Breast epithelium (tissue), 4 donors: ENCODE measurements at regions of chr20 and their contacts with region 1.

Region 1: GRCh38 chr20:1810926-1811620 is 84.1 kb upstream of the SIRPA start:
- DNase-seq: peak in 1 of 2 donors; percentile 92
- H3K4me3 ChIP-seq: peak overlapping the region in 1 of 3 donors; percentile 5
- H3K27ac ChIP-seq: peak overlapping the region; percentile 95 to 96
- H3K4me1 ChIP-seq: peaks cover 14 to 22% of the 10 kb centered on the region in 2 donors
- H3K27me3 ChIP-seq: no peaks in the 10 kb centered on the region
- CTCF ChIP-seq: no peak
- POLR2A ChIP-seq: no peak

Region 2: DNA sequence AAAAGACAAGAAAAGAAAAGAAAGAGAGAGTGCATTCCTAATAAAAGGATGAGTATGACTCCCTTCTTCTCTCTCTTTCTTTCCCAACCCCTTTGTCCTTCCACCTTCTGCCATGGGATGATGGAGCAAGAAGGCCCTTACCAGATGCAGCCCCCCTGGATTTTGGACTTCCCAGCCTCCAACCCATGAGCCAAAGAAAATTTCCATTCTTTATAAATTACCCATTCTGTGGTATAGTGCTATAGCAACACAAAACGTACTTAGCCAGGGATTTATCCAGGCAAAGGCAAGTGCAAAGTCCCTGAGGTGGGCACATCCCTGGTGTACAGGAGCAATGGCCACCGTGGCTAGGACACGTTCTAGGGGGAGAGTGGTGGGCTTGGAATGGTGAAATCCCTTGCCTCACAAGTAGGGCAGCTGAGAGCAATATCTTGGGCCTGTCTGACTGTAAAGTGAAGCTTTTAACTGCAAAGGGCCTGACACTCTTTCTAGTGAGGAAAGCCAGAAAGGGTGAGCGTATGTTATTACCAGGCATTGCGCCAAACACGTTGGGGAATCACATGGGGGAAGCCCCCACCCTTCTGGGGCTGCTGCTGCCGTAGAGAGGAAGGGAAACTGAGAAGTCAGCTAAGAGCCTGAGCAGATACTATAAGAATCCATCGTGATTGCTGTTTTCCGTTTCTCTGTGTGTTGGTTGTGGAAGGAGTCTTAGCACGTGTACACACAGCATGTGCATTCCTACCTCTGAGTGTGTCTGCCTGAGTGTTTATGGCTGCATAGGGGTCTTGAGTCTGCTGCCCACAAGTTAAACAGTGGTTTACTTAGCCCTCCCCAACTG is 33.5 kb after region 1 on chr20:
- intact Hi-C with region 1: no loop called
- DNase-seq: no peak
- H3K4me3 ChIP-seq: no peak overlapping the region
- H3K27ac ChIP-seq: no peak overlapping the region
- H3K4me1 ChIP-seq: no peaks in the 10 kb centered on the region
- H3K27me3 ChIP-seq: no peaks in the 10 kb centered on the region
- CTCF ChIP-seq: no peak
- POLR2A ChIP-seq: no peak

Region 3: GRCh38 chr20:1863296-1863695 is 52.2 kb after region 1 on chr20:
- intact Hi-C with region 1: loop called (anchors 2 kb)
- DNase-seq: no peak
- H3K4me3 ChIP-seq: no peak overlapping the region
- H3K27ac ChIP-seq: no peak overlapping the region
- H3K4me1 ChIP-seq: no peaks in the 10 kb centered on the region
- H3K27me3 ChIP-seq: no peaks in the 10 kb centered on the region
- CTCF ChIP-seq: no peak
- POLR2A ChIP-seq: no peak